PC-3 (cell line): ENCODE measurements at regions of chr13 and their contacts with region 1.

Region 1: DNA sequence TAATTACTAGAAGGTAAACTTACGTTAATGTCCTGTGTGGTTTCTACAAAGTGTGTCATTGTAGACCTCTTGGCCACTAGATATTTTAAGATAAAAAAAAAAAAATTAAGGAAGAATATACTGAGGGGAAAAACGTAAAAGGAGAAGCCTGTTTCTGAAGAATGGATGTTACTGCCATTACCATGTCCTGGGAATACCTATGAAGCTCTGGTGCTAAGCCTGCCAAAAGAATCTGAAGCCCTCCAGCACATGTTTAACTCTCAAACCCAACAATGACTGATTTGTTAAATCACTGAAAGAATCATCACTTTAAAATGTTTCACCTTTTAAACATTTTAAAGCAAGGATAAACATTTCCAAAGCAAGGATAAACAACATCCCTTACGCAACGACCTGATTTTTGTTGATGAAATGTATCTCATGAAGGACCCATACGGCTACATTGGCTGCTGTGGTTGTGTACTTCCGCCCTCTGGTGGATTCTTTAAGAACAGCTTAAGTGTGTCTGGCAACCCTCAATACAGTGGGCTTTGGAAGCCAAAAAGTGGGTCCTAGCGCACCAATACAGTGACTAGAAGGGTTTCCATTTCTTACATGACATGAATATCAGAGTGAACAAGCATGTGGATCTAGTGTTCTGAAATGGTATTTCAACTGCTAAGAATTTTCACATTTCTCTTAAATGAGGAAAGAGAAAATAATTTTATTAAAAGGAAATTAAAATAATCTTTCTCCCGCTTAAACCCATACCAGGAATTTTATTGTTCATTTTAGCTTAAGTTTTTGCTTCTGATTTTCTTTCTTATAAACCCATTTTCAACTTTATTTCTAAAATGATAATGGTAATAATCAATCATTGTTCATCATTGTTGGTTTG is 74.5 kb upstream of the RAP2A start:
- DNase-seq: peak; percentile 68
- ATAC-seq: peak; percentile 81
- H3K4me3 ChIP-seq: no peak overlapping the region
- H3K27ac ChIP-seq: no peak overlapping the region
- H3K4me1 ChIP-seq: no peaks in the 10 kb centered on the region
- H3K27me3 ChIP-seq: no peaks in the 10 kb centered on the region
- CTCF ChIP-seq: peak; percentile 88

Region 2: GRCh38 chr13:97030705-97031452 is 328.5 kb before region 1 on chr13:
- CTCF ChIA-PET with region 1: no interaction called
- POLR2A ChIA-PET with region 1: no interaction called
- intact Hi-C with region 1: loop called (anchors 1 kb)
- DNase-seq: peak; percentile 60
- ATAC-seq: peak; percentile 68
- H3K4me3 ChIP-seq: no peak overlapping the region
- H3K27ac ChIP-seq: no peak overlapping the region
- H3K4me1 ChIP-seq: no peaks in the 10 kb centered on the region; the same call in 1 of the 2 replicates
- H3K27me3 ChIP-seq: no peaks in the 10 kb centered on the region
- CTCF ChIP-seq: peak; percentile 58

Region 3: GRCh38 chr13:97109841-97110492 is 249.5 kb before region 1 on chr13:
- CTCF ChIA-PET with region 1: interaction called, 9 read pairs
- POLR2A ChIA-PET with region 1: no interaction called
- intact Hi-C with region 1: loop called (anchors 5 kb)
- DNase-seq: peak; percentile 82
- ATAC-seq: peak; percentile 94
- H3K4me3 ChIP-seq: no peak overlapping the region
- H3K27ac ChIP-seq: no peak overlapping the region
- H3K4me1 ChIP-seq: peaks cover 12% of the 10 kb centered on the region
- H3K27me3 ChIP-seq: no peaks in the 10 kb centered on the region
- CTCF ChIP-seq: peak; percentile 88

Region 4: DNA sequence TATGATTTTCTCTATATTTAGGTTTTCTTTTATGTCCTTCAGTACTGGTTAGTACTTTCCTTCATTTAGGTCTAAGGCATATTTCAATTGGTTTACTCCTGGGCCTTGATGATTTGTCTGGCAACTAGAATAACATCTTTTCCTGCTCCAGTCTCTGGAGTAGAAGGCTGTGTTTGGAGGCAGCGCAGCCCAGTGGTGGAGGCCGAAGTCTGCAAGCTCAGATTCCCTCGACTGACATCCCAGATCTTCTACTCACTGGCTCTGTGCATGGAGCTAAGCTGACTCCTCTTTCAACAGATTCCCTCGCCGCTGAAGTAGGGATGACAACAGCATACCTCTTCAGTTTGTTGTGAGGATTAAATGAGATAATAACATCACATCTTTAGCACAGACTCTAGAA is 215.5 kb after region 1 on chr13:
- CTCF ChIA-PET with region 1: no interaction called
- POLR2A ChIA-PET with region 1: no interaction called
- intact Hi-C with region 1: loop called (anchors 10 kb)
- DNase-seq: peak; percentile 59
- ATAC-seq: peak; percentile 91
- H3K4me3 ChIP-seq: no peak overlapping the region
- H3K27ac ChIP-seq: no peak overlapping the region
- H3K4me1 ChIP-seq: no peaks in the 10 kb centered on the region
- H3K27me3 ChIP-seq: no peaks in the 10 kb centered on the region
- CTCF ChIP-seq: peak; percentile 72